ENCODE measurements at regions of chr2 and their contacts with region 1.

Region 1: GRCh38 chr2:46887028-46887885 is 28.3 kb downstream of the MCFD2 start:
- DNase-seq: no peak
- CTCF ChIP-seq: no peak

Region 2: DNA sequence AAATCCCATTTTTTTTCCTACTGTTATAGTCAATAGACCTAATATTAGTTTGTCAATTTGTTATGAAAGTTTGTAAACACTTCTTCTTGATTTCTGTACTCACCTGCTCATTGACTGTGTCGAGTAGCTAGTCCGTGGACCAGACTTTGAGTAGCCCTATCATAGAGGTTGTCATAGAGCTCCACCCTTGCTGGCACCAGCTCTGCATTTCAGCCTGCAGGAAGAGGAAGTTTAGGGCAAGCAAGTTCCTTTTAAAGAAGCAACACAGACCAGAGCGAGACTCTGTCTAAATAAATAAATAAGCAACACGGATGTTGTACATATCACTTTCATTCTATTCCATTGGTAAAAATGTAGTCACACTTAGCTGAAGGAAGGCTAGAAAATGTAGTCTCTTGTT is 45.6 kb before region 1 on chr2:
- CTCF ChIA-PET with region 1: no interaction called
- POLR2A ChIA-PET with region 1: no interaction called
- DNase-seq: no peak
- CTCF ChIP-seq: no peak

Region 3: GRCh38 chr2:46899053-46899452 is 11.8 kb after region 1 on chr2:
- CTCF ChIA-PET with region 1: interaction called, 11 read pairs
- POLR2A ChIA-PET with region 1: no interaction called
- DNase-seq: no peak
- CTCF ChIP-seq: no peak

Region 4: GRCh38 chr2:46909150-46909549 is 21.9 kb after region 1 on chr2:
- CTCF ChIA-PET with region 1: no interaction called
- POLR2A ChIA-PET with region 1: no interaction called
- DNase-seq: no peak
- CTCF ChIP-seq: no peak